CD4-positive, alpha-beta memory T cell (primary cell): ENCODE measurements at regions of chr11 and their contacts with region 1.

Region 1: DNA sequence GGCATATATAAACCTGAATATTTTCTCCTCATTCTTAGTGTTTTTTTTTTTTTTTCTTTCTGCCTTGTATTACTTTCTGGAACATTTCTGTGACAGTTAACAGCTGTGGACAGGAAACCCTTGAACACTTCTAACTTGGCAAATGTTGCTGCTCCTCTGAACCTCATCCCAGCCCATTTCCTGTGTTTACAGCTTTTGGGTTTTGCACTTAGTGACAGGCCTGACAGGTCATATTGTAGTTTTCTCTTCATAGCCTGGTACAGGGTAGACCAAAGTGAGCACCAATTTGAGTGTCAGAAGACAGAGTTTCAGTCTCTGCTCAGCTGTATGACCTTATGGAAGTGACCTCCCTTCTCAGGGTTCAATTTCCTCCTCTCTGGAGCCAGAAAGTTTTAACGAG is 91.6 kb downstream of the STIM1 start:
- DNase-seq: peak; percentile 72 to 81 (median 77)
- H3K4me3 ChIP-seq: peak overlapping the region; percentile 19 to 45
- H3K4me3 Mint-ChIP-seq: peak overlapping the region; percentile 72 to 86 (median 80)
- H3K27ac ChIP-seq: peak overlapping the region; percentile 68
- H3K27ac Mint-ChIP-seq: peak overlapping the region; percentile 89 to 98 (median 94)
- H3K4me1 ChIP-seq: peaks cover 99% of the 10 kb centered on the region
- H3K4me1 Mint-ChIP-seq: peaks cover 87 to 97% (median 92%) of the 10 kb centered on the region in 4 donors
- H3K27me3 ChIP-seq: no peaks in the 10 kb centered on the region
- H3K27me3 Mint-ChIP-seq: no peaks in the 10 kb centered on the region

Region 2: GRCh38 chr11:3905080-3905953 is 41.7 kb before region 1 on chr11:
- CTCF ChIA-PET with region 1: interaction called, 8 read pairs
- POLR2A ChIA-PET with region 1: interaction called, 3 read pairs
- intact Hi-C with region 1: loop called (anchors 5 kb)
- DNase-seq: peak; percentile 62 to 89 (median 77)
- H3K4me3 ChIP-seq: no peak overlapping the region
- H3K4me3 Mint-ChIP-seq: peak overlapping the region in 7 of 8 donors; percentile 8 to 67 (median 40)
- H3K27ac ChIP-seq: peak overlapping the region; percentile 45
- H3K27ac Mint-ChIP-seq: peak overlapping the region; percentile 75 to 95 (median 93)
- H3K4me1 ChIP-seq: peaks cover 84% of the 10 kb centered on the region
- H3K4me1 Mint-ChIP-seq: peaks cover 66 to 90% (median 81%) of the 10 kb centered on the region in 4 donors
- H3K27me3 ChIP-seq: no peaks in the 10 kb centered on the region
- H3K27me3 Mint-ChIP-seq: no peaks in the 10 kb centered on the region

Region 3: GRCh38 chr11:3920148-3920852 is 26.8 kb before region 1 on chr11:
- CTCF ChIA-PET with region 1: interaction called, 14 read pairs
- POLR2A ChIA-PET with region 1: interaction called, 4 read pairs
- intact Hi-C with region 1: loop called (anchors 2 kb)
- DNase-seq: peak; percentile 36 to 80 (median 46)
- H3K4me3 ChIP-seq: no peak overlapping the region
- H3K4me3 Mint-ChIP-seq: peak overlapping the region in 7 of 8 donors; percentile 1 to 67 (median 48)
- H3K27ac ChIP-seq: no peak overlapping the region
- H3K27ac Mint-ChIP-seq: peak overlapping the region; percentile 8 to 83 (median 48)
- H3K4me1 ChIP-seq: peaks cover 50% of the 10 kb centered on the region
- H3K4me1 Mint-ChIP-seq: peaks cover 37 to 60% (median 49%) of the 10 kb centered on the region in 4 donors
- H3K27me3 ChIP-seq: no peaks in the 10 kb centered on the region
- H3K27me3 Mint-ChIP-seq: no peaks in the 10 kb centered on the region

Region 4: DNA sequence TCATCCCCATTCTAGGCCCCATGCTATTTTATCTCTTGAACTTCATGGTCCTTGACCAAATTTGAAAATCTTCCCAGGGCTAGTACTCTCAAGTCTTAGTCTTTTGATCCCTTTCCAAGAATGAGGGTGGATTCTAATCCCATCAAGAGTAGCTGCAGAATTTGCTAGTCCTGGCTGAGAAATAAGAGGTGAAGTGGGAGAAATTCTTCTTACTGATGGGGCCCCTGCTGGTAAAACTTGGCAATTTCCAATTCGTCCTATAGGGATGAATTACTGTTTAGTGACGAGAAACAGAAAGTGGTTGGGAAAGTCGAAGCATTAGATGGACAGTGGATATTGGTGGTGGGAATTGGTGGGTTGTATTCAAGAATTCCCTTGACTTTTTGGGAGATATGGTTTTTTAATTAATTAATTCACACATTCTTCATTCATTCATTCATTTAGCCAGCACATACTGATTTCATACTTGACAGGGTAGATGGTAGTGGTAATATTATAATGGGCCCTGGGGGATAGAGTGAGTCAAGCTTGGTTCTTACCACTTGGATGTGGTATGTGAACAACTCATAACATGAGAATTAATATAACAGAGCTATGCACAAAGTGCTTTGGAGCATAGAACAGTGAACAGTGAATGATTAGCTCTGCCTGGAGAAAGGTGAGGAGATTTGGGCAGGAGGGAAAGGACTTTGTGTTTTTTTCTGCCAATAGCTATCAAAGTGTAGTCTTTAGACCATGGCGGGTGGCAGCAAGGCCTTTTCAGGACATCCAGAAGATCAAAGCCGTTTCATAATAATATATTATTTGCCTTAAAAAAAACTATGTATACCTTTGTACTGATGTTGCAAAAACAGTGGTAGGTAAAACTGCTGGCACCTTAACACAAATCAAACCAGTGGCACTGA is 12.2 kb after region 1 on chr11:
- CTCF ChIA-PET with region 1: interaction called, 26 read pairs
- POLR2A ChIA-PET with region 1: interaction called, 10 read pairs
- intact Hi-C with region 1: loop called (anchors 2 kb)
- DNase-seq: no peak
- H3K4me3 ChIP-seq: no peak overlapping the region
- H3K4me3 Mint-ChIP-seq: peak overlapping the region in 3 of 8 donors; percentile 1 to 6 (median 4)
- H3K27ac ChIP-seq: no peak overlapping the region
- H3K27ac Mint-ChIP-seq: peak overlapping the region in 3 of 7 donors; percentile 11 to 68 (median 37)
- H3K4me1 ChIP-seq: peaks cover 60% of the 10 kb centered on the region
- H3K4me1 Mint-ChIP-seq: peaks cover 50 to 90% (median 71%) of the 10 kb centered on the region in 4 donors
- H3K27me3 ChIP-seq: no peaks in the 10 kb centered on the region
- H3K27me3 Mint-ChIP-seq: no peaks in the 10 kb centered on the region

Region 5: GRCh38 chr11:3969613-3970012 is 22.6 kb after region 1 on chr11:
- CTCF ChIA-PET with region 1: interaction called, 3 read pairs
- POLR2A ChIA-PET with region 1: interaction called, 12 read pairs
- intact Hi-C with region 1: no loop called
- DNase-seq: peak in 2 of 5 donors; percentile 13 to 22
- H3K4me3 ChIP-seq: no peak overlapping the region
- H3K4me3 Mint-ChIP-seq: peak overlapping the region; percentile 1 to 80 (median 36)
- H3K27ac ChIP-seq: no peak overlapping the region
- H3K27ac Mint-ChIP-seq: peak overlapping the region; percentile 0 to 90 (median 57)
- H3K4me1 ChIP-seq: peaks cover 47% of the 10 kb centered on the region
- H3K4me1 Mint-ChIP-seq: peaks cover 54 to 82% (median 69%) of the 10 kb centered on the region in 4 donors
- H3K27me3 ChIP-seq: no peaks in the 10 kb centered on the region
- H3K27me3 Mint-ChIP-seq: no peaks in the 10 kb centered on the region

Region 6: GRCh38 chr11:3995949-3996554 is 49.0 kb after region 1 on chr11:
- CTCF ChIA-PET with region 1: interaction called, 3 read pairs
- POLR2A ChIA-PET with region 1: interaction called, 4 read pairs
- intact Hi-C with region 1: loop called (anchors 10 kb)
- DNase-seq: no peak
- H3K4me3 ChIP-seq: no peak overlapping the region
- H3K4me3 Mint-ChIP-seq: peak overlapping the region in 1 of 8 donors; percentile 20
- H3K27ac ChIP-seq: no peak overlapping the region
- H3K27ac Mint-ChIP-seq: peak overlapping the region in 6 of 7 donors; percentile 21 to 64 (median 44)
- H3K4me1 ChIP-seq: peaks cover 24% of the 10 kb centered on the region
- H3K4me1 Mint-ChIP-seq: peaks cover 30 to 63% (median 42%) of the 10 kb centered on the region in 4 donors
- H3K27me3 ChIP-seq: no peaks in the 10 kb centered on the region
- H3K27me3 Mint-ChIP-seq: no peaks in the 10 kb centered on the region